ENCODE measurements at regions of chr17 and their contacts with region 1.

Region 1: GRCh38 chr17:41002814-41003213 is 3.1 kb upstream of the KRTAP3-2 start:
- DNase-seq: no peak
- H3K4me3 Mint-ChIP-seq: no peak overlapping the region
- H3K27ac Mint-ChIP-seq: peak overlapping the region; percentile 40
- H3K4me1 Mint-ChIP-seq: peaks cover 30% of the 10 kb centered on the region
- H3K27me3 Mint-ChIP-seq: no peaks in the 10 kb centered on the region
- CTCF ChIP-seq: no peak

Region 2: DNA sequence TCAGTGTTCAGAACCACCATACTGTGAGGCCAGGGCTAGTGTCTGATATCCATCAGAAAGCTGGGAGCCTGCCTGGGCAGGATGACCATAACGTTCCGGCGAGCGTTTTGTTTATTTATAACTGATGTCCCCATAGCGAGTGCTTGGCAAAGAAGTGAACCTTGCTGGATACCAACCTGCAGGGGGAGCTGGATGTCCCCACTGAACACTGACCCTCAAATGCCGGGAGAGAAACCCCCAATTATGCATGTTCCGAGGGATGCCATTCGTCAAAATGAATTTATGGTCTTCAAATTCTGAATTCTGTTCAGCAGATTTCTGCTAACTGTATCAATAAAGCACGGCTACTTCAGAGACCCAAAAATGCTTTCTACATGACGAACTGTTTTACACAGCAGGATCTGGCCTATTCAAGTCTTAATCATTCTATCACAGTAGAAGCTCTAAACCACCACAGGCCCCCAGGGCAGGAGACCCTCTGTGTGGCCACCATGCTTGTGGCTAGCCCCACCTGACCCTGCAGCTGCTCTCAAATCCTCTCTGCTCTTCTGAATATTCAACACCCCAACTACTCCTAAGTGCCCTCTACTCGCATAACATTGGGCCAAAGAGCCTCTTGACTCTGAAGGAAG is 963.8 kb before region 1 on chr17:
- CTCF ChIA-PET with region 1: no interaction called
- intact Hi-C with region 1: no loop called
- DNase-seq: peak; percentile 92
- H3K4me3 Mint-ChIP-seq: no peak overlapping the region
- H3K27ac Mint-ChIP-seq: no peak overlapping the region
- H3K4me1 Mint-ChIP-seq: peaks cover 8% of the 10 kb centered on the region
- H3K27me3 Mint-ChIP-seq: no peaks in the 10 kb centered on the region
- CTCF ChIP-seq: no peak

Region 3: DNA sequence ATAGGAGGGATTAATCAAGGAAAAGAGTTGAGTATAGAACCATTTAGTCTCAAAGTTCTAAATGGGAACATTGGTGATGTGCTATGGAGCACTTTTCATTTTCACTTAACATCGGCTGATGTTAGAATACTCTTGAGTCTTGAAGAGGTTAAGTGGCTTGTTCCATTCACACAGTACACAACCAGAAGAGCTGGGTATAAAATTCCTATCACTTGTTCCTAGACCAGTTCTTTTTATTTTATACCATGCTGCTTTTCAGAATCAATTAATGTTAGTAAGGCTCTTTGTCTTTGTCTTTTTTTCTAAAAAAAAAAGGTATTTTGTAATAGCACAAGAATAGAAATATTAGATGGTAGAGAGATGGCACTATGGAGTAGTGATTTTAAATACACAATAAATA is 40.1 kb after region 1 on chr17:
- CTCF ChIA-PET with region 1: no interaction called
- intact Hi-C with region 1: loop called (anchors 5 kb)
- DNase-seq: no peak
- H3K4me3 Mint-ChIP-seq: no peak overlapping the region
- H3K27ac Mint-ChIP-seq: no peak overlapping the region
- H3K4me1 Mint-ChIP-seq: peaks cover 35% of the 10 kb centered on the region
- H3K27me3 Mint-ChIP-seq: no peaks in the 10 kb centered on the region
- CTCF ChIP-seq: no peak

Region 4: DNA sequence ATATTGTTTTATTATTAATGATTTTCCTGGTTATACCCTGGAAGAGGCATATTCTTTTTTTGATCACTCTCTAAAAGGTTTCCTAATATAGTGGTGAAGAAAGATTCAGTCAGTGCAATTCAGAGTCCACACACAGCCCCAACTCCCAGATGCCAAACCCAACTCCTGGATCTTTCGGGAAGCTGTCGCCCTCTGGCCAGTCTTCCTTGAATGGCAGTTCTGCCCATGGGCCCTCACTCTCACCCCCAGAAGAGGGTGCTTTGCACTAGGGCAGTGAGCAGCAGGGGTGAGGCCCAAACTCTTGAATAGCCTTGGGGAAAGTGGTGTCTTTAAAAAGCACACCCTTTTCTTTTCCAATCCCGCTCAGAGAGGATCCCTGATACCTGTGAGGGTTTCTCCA is 453.4 kb after region 1 on chr17:
- CTCF ChIA-PET with region 1: no interaction called
- intact Hi-C with region 1: no loop called
- DNase-seq: peak; percentile 56
- H3K4me3 Mint-ChIP-seq: no peak overlapping the region
- H3K27ac Mint-ChIP-seq: no peak overlapping the region
- H3K4me1 Mint-ChIP-seq: no peaks in the 10 kb centered on the region
- H3K27me3 Mint-ChIP-seq: no peaks in the 10 kb centered on the region
- CTCF ChIP-seq: peak; percentile 41

Measured in Calu3 (cell line).